Caco-2 (cell line): ENCODE measurements at regions of chr5 and their contacts with region 1.

Region 1: DNA sequence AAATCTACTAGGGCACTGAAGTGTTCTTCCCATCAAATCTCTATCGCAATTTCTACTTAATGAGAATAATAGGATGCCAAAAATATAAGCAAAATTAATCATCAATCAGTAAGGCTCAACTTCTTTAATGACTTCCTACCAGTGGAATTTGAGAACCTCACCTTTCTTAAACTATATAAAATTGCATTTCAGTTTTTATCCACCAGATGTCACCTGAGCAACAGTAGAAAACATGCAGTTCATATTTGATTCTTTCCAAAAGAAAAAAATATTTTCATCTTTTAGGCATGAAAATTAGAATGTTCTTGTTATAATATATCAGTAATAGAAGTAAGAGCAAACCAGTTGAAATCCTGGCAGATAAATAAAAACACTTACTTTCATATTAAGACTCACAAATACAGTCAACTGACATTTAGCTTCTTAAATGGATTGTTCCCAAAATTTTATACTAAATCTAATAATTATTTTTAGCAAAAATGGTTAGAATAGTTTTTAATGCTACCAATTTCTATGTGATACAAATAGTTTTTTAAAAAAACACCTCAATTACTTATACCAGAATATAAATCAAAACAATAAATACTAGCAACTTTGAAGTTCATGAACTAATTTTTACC is 13.4 kb upstream of the CCDC112 start:
- DNase-seq: peak in 1 of 2 experiments; percentile 24
- H3K4me3 ChIP-seq: no peak overlapping the region
- H3K4me3 Mint-ChIP-seq: no peak overlapping the region
- H3K27ac Mint-ChIP-seq: no peak overlapping the region
- H3K4me1 ChIP-seq: no peaks in the 10 kb centered on the region
- H3K4me1 Mint-ChIP-seq: no peaks in the 10 kb centered on the region
- H3K27me3 ChIP-seq: no peaks in the 10 kb centered on the region
- H3K27me3 Mint-ChIP-seq: no peaks in the 10 kb centered on the region
- CTCF ChIP-seq: peak in 1 of 2 experiments; percentile 43

Region 2: DNA sequence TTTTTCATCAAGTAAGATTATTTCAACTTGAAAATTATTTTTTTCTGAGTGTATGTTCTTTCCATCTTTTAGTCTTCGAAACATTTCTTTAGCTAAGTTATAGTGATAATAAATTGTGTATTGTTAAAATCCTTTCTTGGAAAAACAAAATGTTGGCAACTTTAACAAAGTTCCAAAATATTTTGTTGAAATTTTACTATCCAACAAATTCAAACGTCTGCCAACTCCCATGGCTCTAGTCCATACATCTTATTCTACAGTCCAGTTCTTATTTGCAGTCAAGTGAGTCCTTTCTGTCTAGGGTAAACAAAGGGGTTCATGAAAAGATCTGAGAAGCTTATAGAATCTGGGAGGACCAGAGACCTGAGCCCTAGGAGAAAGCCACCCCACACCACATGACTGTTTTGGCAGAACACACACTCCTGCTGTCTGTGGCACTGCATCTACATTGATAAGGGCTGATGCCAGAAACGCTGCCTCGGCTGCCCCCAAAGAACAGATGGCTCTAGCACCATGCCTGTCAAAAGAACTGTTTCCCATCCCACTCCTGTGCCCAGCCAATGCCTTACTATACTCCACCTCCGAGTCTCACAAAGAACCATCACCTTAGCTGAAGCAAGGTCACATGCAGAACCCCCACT is 187.2 kb after region 1 on chr5:
- CTCF ChIA-PET with region 1: no interaction called
- POLR2A ChIA-PET with region 1: no interaction called
- intact Hi-C with region 1: no loop called
- DNase-seq: no peak
- H3K4me3 ChIP-seq: no peak overlapping the region
- H3K4me3 Mint-ChIP-seq: no peak overlapping the region
- H3K27ac Mint-ChIP-seq: no peak overlapping the region
- H3K4me1 ChIP-seq: no peaks in the 10 kb centered on the region
- H3K4me1 Mint-ChIP-seq: no peaks in the 10 kb centered on the region
- H3K27me3 ChIP-seq: no peaks in the 10 kb centered on the region; the same call in 1 of the 2 replicates
- H3K27me3 Mint-ChIP-seq: peaks cover 19% of the 10 kb centered on the region
- CTCF ChIP-seq: no peak

Region 3: DNA sequence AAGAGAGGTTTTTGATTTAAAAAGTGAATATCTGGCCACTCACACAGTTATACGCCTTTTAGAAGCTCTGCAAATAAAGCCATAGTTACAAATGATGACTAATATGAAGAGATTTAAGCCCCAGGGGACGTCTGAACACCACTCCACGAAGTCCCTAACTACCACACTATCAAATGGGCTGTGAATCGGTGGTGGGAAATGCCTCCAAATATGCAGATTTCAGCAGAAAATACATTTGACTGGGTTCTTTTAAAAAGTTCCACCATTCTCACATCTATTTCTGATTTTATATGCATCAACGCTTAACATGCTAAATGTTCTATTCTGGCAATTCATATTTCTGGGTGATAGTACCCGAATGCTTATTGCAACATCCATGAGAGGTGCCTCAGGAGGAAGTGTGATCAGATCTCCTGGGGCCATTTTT is 269.9 kb after region 1 on chr5:
- CTCF ChIA-PET with region 1: interaction called, 23 read pairs
- POLR2A ChIA-PET with region 1: no interaction called
- intact Hi-C with region 1: loop called (anchors 1 kb)
- DNase-seq: no peak
- H3K4me3 ChIP-seq: no peak overlapping the region
- H3K4me3 Mint-ChIP-seq: no peak overlapping the region
- H3K27ac Mint-ChIP-seq: no peak overlapping the region
- H3K4me1 ChIP-seq: no peaks in the 10 kb centered on the region
- H3K4me1 Mint-ChIP-seq: no peaks in the 10 kb centered on the region
- H3K27me3 ChIP-seq: no peaks in the 10 kb centered on the region
- H3K27me3 Mint-ChIP-seq: no peaks in the 10 kb centered on the region
- CTCF ChIP-seq: no peak

Region 4: DNA sequence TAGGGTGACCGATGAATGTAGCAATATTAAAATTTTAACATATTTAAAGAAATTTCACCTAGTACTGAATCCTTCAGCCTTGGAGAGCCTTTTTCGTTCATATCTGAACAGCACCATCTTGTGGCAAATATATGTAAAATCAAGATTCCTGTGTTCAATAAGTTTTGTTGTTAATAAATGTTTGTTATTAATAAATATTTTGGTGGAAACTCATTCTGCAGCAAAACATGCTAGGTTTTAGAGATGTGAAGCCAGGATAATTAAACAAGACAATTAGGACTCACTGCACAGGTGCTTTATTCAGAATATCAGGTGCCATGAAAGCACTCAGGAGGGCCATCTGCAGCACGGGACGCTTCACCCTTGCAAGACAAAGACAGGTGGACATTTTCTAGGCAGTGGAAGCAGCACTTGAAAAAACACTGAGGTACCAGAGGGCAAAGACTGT is 276.8 kb after region 1 on chr5:
- CTCF ChIA-PET with region 1: interaction called, 4 read pairs
- POLR2A ChIA-PET with region 1: no interaction called
- intact Hi-C with region 1: loop called (anchors 1 kb)
- DNase-seq: peak in 1 of 2 experiments; percentile 5
- H3K4me3 ChIP-seq: no peak overlapping the region
- H3K4me3 Mint-ChIP-seq: no peak overlapping the region
- H3K27ac Mint-ChIP-seq: no peak overlapping the region
- H3K4me1 ChIP-seq: no peaks in the 10 kb centered on the region
- H3K4me1 Mint-ChIP-seq: no peaks in the 10 kb centered on the region
- H3K27me3 ChIP-seq: no peaks in the 10 kb centered on the region
- H3K27me3 Mint-ChIP-seq: no peaks in the 10 kb centered on the region
- CTCF ChIP-seq: peak; percentile 38 to 60